ENCODE measurements at regions of chr3 and their contacts with region 1.

Region 1: GRCh38 chr3:23389089-23389488 is 186.0 kb downstream of the UBE2E2 start:
- DNase-seq: peak; percentile 83
- H3K4me3 ChIP-seq: peak overlapping the region; percentile 89
- H3K27ac ChIP-seq: peak overlapping the region; percentile 99
- H3K4me1 ChIP-seq: peaks cover 60% of the 10 kb centered on the region
- CTCF ChIP-seq: no peak

Region 2: DNA sequence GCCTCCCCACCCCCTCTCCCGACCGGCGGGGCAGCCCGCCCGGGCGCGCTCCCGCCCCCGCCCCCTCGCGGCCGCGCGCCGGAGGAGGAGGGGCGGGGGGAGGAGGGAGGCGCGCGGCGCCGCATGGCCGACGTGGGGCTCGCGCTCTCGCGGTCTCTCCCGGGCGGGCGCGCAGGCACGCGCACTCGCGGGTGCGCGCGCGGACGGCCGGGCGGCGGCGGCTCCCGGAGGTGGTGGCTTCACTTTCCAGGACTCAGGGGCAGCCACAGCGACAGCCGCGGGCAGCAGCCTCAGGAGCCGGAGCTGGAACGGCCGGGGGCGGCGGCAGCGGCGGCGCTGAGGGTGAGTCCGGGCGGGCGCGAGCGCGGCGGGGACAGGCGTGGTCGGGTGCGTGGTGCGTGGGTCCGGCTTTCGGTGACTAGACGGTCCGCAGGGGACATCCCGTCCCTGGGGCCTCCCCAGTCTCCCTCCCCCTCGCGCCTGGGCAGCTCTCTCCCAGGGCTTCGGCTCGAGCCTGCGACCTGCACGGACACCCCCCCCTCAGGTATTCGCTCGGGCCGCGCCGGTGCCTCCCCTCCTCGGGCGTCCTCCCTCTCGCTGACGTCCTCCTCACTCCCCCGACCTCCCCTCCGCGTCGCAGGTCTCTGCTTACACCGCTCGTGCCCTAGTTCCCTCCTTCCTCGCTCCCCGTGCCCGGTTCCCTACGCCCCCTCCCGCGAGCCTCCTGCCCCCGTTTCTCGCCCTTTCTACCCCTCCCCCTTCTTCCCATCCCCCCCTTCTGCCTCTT is 186.0 kb before region 1 on chr3 and contains the start of gene UBE2E2:
- CTCF ChIA-PET with region 1: no interaction called
- POLR2A ChIA-PET with region 1: interaction called, 5 read pairs
- intact Hi-C with region 1: loop called (anchors 2 kb)
- DNase-seq: peak; percentile 88
- H3K4me3 ChIP-seq: peak within 1 kb of the TSS; percentile 99
- H3K27ac ChIP-seq: peak within 1 kb of the TSS; percentile 33
- H3K4me1 ChIP-seq: peaks cover 29% of the 10 kb centered on the region
- CTCF ChIP-seq: no peak
- total RNA-seq, gene UBE2E2: 41.1 and 63.2 TPM in 2 replicates

Region 3: DNA sequence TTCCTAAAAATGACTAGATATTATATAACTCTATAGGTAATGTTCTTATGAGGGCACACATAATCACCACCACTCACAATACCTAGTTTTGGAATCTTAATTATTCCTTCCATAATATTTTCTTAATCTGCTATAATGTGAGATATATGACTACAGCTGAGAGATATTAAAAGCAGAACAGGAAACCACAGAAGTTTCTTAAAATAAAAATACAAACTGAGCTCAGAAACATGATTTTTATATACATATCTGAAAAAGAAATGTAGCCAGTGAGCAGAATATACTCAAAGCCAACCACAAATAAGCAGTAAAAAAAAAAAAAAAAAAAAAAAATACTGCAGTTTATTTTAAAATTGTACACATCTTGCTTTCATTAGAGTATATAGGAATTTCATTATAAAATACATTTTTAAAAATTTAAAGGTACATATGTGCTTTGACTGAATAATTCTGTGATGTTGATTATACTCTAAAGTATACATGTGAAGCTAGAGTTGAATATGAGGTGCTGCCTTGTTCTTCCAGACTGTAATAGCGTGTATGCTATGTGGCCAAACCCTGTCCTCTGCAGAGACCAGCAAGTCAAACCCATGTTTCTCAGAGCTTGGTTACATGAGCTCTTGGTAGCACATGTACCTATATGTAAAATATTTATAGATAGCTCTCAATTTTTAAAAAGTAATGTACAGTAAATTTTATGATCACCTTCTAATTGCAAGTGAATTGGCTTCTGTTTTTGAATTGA is 11.0 kb before region 1 on chr3:
- CTCF ChIA-PET with region 1: no interaction called
- POLR2A ChIA-PET with region 1: interaction called, 60 read pairs
- intact Hi-C with region 1: no loop called
- DNase-seq: peak; percentile 60
- H3K4me3 ChIP-seq: peak overlapping the region; percentile 46
- H3K27ac ChIP-seq: peak overlapping the region; percentile 79
- H3K4me1 ChIP-seq: peaks cover 72% of the 10 kb centered on the region
- CTCF ChIP-seq: no peak

Region 4: GRCh38 chr3:23519314-23520208 is 130.5 kb after region 1 on chr3:
- CTCF ChIA-PET with region 1: no interaction called
- POLR2A ChIA-PET with region 1: interaction called, 7 read pairs
- intact Hi-C with region 1: loop called (anchors 1 kb)
- DNase-seq: peak; percentile 72
- H3K4me3 ChIP-seq: peak overlapping the region; percentile 8
- H3K27ac ChIP-seq: peak overlapping the region; percentile 47
- H3K4me1 ChIP-seq: peaks cover 63% of the 10 kb centered on the region
- CTCF ChIP-seq: no peak

Region 5: DNA sequence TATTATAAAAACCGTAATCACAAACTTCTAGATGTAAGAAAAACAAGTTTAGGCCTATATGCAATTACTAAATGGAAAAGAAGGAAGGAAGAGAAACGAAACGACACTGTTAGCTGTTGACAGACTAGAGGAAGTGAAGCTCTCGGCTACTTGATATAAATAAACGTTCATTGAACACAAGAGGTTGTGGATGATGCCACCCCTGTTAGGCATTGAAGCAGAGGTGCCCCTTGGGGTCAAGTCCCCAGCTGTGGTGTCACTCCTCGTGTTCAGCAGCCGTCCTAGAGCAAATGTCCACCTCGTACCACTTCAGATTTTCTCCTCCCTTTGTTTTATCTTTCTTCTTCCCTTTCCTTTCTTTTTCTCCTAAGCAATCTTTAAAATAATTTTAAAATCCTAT is 270.2 kb after region 1 on chr3:
- CTCF ChIA-PET with region 1: interaction called, 3 read pairs
- POLR2A ChIA-PET with region 1: interaction called, 30 read pairs
- intact Hi-C with region 1: loop called (anchors 2 kb)
- DNase-seq: peak; percentile 96
- H3K4me3 ChIP-seq: peak overlapping the region; percentile 53
- H3K27ac ChIP-seq: peak overlapping the region; percentile 97
- H3K4me1 ChIP-seq: peaks cover 93% of the 10 kb centered on the region
- CTCF ChIP-seq: no peak

Region 6: DNA sequence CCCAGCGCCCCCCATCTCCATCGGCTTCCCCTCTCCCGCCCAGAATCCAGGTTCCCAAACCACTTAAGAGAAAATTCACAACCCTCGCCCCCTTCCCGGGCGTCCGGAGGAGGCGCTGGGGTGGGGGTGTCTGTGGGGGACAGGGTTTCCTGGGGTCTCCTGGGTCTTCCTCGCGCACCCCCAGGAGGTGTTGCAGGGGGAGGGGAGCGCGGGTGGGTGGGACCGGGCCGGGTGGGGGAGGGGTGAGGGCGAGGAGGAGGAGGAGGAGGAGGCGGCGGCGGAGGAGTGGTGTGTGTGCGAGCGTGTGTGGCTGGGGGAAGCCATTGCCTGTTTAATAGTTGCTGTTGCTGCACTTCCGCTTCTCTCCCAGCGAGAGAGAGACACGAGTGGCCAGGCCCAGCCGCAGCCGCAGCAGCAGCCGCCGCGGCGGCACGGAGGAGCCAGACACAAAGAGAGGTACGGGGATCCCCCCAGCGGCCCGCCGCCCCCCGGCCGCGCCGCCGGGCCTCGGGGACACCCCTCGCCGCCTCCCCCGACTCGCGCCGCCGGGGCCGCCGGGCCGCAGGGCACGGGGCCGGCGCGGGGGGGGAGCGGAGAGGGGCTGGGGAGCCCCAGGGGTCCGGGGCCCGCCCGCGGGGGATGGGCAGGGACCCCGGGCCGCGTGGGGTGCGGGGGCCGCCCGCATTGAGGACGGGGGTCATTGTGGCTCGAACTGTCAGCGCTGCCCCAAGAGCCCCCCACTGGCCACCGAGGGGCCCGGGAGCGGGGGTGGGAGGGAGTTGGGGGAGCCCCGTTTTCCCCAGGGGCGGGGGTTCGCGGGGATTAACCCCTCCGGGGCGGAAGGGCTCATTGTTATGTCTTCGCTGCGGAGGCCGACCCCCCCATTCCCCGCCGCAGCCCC is 416.8 kb after region 1 on chr3 and contains the start of gene UBE2E1:
- CTCF ChIA-PET with region 1: no interaction called
- POLR2A ChIA-PET with region 1: interaction called, 4 read pairs
- intact Hi-C with region 1: loop called (anchors 2 kb)
- DNase-seq: peak; percentile 87
- H3K4me3 ChIP-seq: peak within 1 kb of the TSS; percentile 85
- H3K27ac ChIP-seq: peak within 1 kb of the TSS; percentile 47
- H3K4me1 ChIP-seq: peaks cover 48% of the 10 kb centered on the region
- CTCF ChIP-seq: no peak
- total RNA-seq, gene UBE2E1: 96.7 and 126 TPM in 2 replicates

Measured in OCI-LY7 (cell line).